A673 (cell line): ENCODE measurements at regions of chr10 and their contacts with region 1.

Region 1: GRCh38 chr10:19616966-19617365 is 199.3 kb upstream of the PLXDC2 start:
- DNase-seq: no peak
- H3K4me3 ChIP-seq: no peak overlapping the region
- H3K27ac ChIP-seq: no peak overlapping the region
- H3K4me1 ChIP-seq: no peaks in the 10 kb centered on the region
- H3K27me3 ChIP-seq: no peaks in the 10 kb centered on the region
- CTCF ChIP-seq: no peak

Region 2: GRCh38 chr10:18689498-18689897 is 927.5 kb before region 1 on chr10:
- CTCF ChIA-PET with region 1: no interaction called
- POLR2A ChIA-PET with region 1: no interaction called
- intact Hi-C with region 1: loop called (anchors 5 kb)
- DNase-seq: peak; percentile 64
- H3K4me3 ChIP-seq: no peak overlapping the region
- H3K27ac ChIP-seq: no peak overlapping the region
- H3K4me1 ChIP-seq: peaks cover 12% of the 10 kb centered on the region
- H3K27me3 ChIP-seq: no peaks in the 10 kb centered on the region
- CTCF ChIP-seq: peak; percentile 65

Region 3: GRCh38 chr10:19220829-19221228 is 396.1 kb before region 1 on chr10:
- CTCF ChIA-PET with region 1: no interaction called
- POLR2A ChIA-PET with region 1: no interaction called
- intact Hi-C with region 1: no loop called
- DNase-seq: no peak
- H3K4me3 ChIP-seq: no peak overlapping the region
- H3K27ac ChIP-seq: no peak overlapping the region
- H3K4me1 ChIP-seq: no peaks in the 10 kb centered on the region
- H3K27me3 ChIP-seq: no peaks in the 10 kb centered on the region
- CTCF ChIP-seq: no peak

Region 4: GRCh38 chr10:19325581-19325980 is 291.4 kb before region 1 on chr10:
- CTCF ChIA-PET with region 1: no interaction called
- POLR2A ChIA-PET with region 1: no interaction called
- intact Hi-C with region 1: no loop called
- DNase-seq: no peak
- H3K4me3 ChIP-seq: no peak overlapping the region
- H3K27ac ChIP-seq: no peak overlapping the region
- H3K4me1 ChIP-seq: peaks cover 22% of the 10 kb centered on the region
- H3K27me3 ChIP-seq: no peaks in the 10 kb centered on the region
- CTCF ChIP-seq: no peak